GM18951 (cell line): ENCODE measurements at regions of chr7 and their contacts with region 1.

Region 1: GRCh38 chr7:101058355-101058754 is 26.9 kb upstream of the TRIM56 start:
- POLR2A ChIP-seq: no peak

Region 2: DNA sequence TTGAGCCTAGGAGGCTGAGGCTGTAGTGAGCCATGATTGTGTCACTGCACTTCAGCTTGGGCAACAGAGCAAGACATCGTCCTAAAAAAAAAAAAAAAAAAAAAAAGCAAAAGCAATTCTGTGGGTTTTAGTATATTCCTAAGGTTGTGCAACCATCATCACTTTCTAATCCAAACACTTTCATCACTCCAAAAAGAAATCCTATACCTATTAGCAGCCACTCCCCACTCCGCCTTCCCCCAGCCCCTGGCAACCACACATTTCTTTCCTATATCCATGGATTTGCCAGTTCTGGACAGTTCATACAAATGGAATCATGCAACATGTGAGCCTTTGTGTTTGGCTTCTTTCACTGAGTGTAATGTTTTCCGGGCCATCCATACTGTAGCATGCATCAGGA is 304.6 kb before region 1 on chr7:
- in situ Hi-C with region 1: loop called (anchors 25 kb)
- POLR2A ChIP-seq: no peak

Region 3: DNA sequence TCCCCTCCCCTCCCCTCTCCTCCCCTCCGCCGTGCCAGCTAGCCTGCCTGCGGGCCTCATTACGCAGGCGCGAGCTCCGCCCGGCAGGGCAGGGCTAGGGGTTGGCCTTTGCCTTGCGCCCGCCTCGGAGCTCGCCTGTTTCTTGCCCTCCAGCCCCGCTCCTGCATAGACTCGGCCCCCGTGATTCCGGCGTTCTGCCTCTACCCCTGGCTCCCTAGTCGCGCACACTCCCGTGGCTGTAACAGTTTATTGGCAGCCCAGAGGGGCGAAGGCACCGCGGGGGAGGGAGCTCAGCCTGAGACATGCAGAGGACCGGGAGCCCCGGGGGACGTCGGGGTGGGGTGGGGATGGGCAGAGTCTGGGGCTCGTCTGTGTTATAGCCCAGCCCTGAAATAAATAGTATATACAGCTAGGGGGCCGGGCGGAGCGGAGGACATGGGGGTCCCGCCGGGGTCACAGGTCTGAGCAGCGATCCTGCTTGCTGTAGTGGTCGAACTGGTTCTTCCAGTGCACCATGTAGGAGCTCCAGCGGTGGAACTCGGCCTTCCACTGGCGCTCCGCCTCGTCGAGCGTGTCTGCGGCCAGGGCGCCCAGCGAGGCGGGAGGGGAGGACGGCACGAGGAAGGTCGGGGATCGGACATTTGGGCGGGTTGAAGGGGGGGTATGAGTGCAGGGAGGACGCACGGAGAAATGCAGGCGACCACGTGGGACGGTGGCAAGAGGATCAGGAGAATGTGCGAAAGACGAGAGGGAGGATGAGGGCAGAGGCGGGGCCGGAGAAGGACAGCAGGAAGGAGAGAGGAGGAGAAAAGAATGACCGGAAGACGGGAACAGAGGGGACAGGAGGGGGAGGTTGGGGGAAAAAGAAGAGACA is 168.4 kb before region 1 on chr7:
- in situ Hi-C with region 1: loop called (anchors 5 kb)
- POLR2A ChIP-seq: peak; percentile 84

Region 4: GRCh38 chr7:101217388-101218235 is 159.3 kb after region 1 on chr7 and contains the starts of genes PLOD3 and ZNHIT1:
- in situ Hi-C with region 1: no loop called
- POLR2A ChIP-seq: peak; percentile 55